IMR-90 (cell line): ENCODE measurements at regions of chr4 and their contacts with region 1.

Region 1: GRCh38 chr4:124334119-124334518 is 378.4 kb downstream of the ANKRD50 start:
- DNase-seq: peak; percentile 89
- ATAC-seq: peak; percentile 96
- H3K4me3 ChIP-seq: no peak overlapping the region
- H3K27ac ChIP-seq: no peak overlapping the region
- H3K4me1 ChIP-seq: no peaks in the 10 kb centered on the region
- H3K27me3 ChIP-seq: no peaks in the 10 kb centered on the region
- CTCF ChIP-seq: peak; percentile 75
- POLR2A ChIP-seq: no peak
- RAD21 ChIP-seq: peak; percentile 80

Region 2: DNA sequence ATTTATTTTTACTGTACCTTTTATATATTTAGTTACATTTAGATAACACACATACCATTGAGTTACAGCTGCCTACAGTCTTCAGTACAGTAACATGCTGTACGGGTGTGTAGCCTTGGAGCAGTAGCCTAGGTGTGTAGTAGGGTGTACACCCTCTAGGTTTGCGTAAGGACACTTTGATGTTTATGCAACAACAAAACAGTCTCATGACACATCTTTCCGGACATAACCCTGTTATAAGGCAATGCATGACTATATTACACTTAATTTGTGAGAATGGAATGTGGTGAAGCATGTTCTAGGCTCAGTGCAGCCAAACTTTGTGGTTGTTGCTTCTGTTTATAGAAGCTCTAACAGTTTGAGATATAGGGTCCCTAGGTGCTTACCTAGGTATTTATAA is 872.1 kb before region 1 on chr4:
- CTCF ChIA-PET with region 1: no interaction called
- POLR2A ChIA-PET with region 1: no interaction called
- dilution Hi-C with region 1: no loop called
- in situ Hi-C with region 1: no loop called
- intact Hi-C with region 1: no loop called
- DNase-seq: peak; percentile 26
- ATAC-seq: peak; percentile 53
- H3K4me3 ChIP-seq: no peak overlapping the region
- H3K27ac ChIP-seq: no peak overlapping the region
- H3K4me1 ChIP-seq: no peaks in the 10 kb centered on the region
- H3K27me3 ChIP-seq: no peaks in the 10 kb centered on the region
- CTCF ChIP-seq: no peak
- POLR2A ChIP-seq: no peak
- RAD21 ChIP-seq: no peak

Region 3: GRCh38 chr4:124641715-124642381 is 307.7 kb after region 1 on chr4:
- CTCF ChIA-PET with region 1: no interaction called
- POLR2A ChIA-PET with region 1: no interaction called
- dilution Hi-C with region 1: no loop called
- in situ Hi-C with region 1: no loop called
- intact Hi-C with region 1: loop called (anchors 10 kb)
- DNase-seq: peak; percentile 94
- ATAC-seq: peak; percentile 49
- H3K4me3 ChIP-seq: no peak overlapping the region
- H3K27ac ChIP-seq: no peak overlapping the region
- H3K4me1 ChIP-seq: no peaks in the 10 kb centered on the region
- H3K27me3 ChIP-seq: no peaks in the 10 kb centered on the region
- CTCF ChIP-seq: no peak
- POLR2A ChIP-seq: no peak
- RAD21 ChIP-seq: no peak

Region 4: GRCh38 chr4:124712372-124713184 is 378.5 kb after region 1 on chr4 and contains the start of gene ANKRD50:
- CTCF ChIA-PET with region 1: interaction called, 4 read pairs
- POLR2A ChIA-PET with region 1: no interaction called
- dilution Hi-C with region 1: no loop called
- in situ Hi-C with region 1: no loop called
- intact Hi-C with region 1: loop called (anchors 1 kb)
- DNase-seq: peak; percentile 94
- ATAC-seq: peak; percentile 78
- H3K4me3 ChIP-seq: peak within 1 kb of the TSS; percentile 87
- H3K27ac ChIP-seq: peak within 1 kb of the TSS; percentile 90
- H3K4me1 ChIP-seq: peaks cover 4% of the 10 kb centered on the region
- H3K27me3 ChIP-seq: no peaks in the 10 kb centered on the region
- CTCF ChIP-seq: no peak
- POLR2A ChIP-seq: peak; percentile 97
- RAD21 ChIP-seq: 0 out of 2 replicates have a peak, but pooled peaks have one; percentile 7
- total RNA-seq, gene ANKRD50: 35.3 and 45.8 TPM in 2 replicates

Region 5: DNA sequence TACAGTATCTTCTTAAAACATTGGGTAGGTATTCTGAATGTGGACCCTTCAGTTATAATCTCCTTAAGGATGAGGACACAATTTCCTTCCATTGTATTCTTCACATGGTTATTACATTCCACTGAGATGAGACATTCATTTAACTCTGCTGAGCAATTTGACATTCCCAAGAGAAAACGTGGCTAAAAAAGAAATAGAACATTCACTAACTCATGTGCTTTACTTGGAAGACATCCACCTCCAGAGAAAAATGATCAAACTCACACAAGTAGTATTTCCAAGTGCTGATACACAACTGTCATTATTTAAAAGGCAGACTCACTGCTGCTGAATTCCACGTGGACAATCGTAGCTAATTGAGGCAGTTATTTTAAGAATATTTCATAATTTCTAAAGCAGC is 606.3 kb after region 1 on chr4:
- CTCF ChIA-PET with region 1: no interaction called
- POLR2A ChIA-PET with region 1: no interaction called
- dilution Hi-C with region 1: no loop called
- in situ Hi-C with region 1: no loop called
- intact Hi-C with region 1: loop called (anchors 10 kb)
- DNase-seq: peak; percentile 98
- ATAC-seq: peak; percentile 68
- H3K4me3 ChIP-seq: no peak overlapping the region
- H3K27ac ChIP-seq: no peak overlapping the region
- H3K4me1 ChIP-seq: peaks cover 3% of the 10 kb centered on the region
- H3K27me3 ChIP-seq: no peaks in the 10 kb centered on the region
- CTCF ChIP-seq: no peak
- POLR2A ChIP-seq: no peak
- RAD21 ChIP-seq: no peak

Region 6: GRCh38 chr4:125041372-125041930 is 707.3 kb after region 1 on chr4:
- CTCF ChIA-PET with region 1: no interaction called
- POLR2A ChIA-PET with region 1: no interaction called
- dilution Hi-C with region 1: no loop called
- in situ Hi-C with region 1: no loop called
- intact Hi-C with region 1: loop called (anchors 10 kb)
- DNase-seq: no peak
- ATAC-seq: no peak
- H3K4me3 ChIP-seq: no peak overlapping the region
- H3K27ac ChIP-seq: no peak overlapping the region
- H3K4me1 ChIP-seq: no peaks in the 10 kb centered on the region
- H3K27me3 ChIP-seq: no peaks in the 10 kb centered on the region
- CTCF ChIP-seq: no peak
- POLR2A ChIP-seq: no peak
- RAD21 ChIP-seq: no peak

Region 7: DNA sequence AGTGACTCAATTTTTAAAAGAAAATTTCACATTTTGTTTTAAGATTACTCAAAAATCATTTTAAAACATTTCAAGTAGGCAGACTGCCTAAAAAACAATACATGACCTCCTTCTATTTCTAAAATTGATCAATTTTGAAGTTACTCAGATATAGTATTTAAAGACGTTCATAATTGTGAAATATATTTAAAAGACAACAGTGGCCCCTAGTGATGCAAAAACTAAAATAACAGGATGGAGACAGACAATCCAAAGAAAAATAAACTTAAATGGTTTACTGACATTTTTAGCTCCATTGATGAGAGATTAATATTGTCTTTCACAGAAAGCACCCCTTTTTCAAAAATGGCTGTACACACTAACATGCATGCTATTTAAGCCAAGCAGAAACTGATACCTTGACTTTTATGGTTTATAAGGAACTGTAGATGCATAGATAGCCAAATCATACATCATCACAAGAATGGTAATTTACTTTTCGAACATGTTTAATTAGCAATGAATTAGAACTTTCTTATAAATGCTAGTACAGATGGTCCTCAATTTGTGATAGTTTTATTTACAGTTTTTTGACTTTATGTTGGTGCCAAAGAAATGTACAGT is 910.8 kb after region 1 on chr4:
- CTCF ChIA-PET with region 1: interaction called, 4 read pairs
- POLR2A ChIA-PET with region 1: no interaction called
- dilution Hi-C with region 1: no loop called
- in situ Hi-C with region 1: loop called (anchors 10 kb)
- intact Hi-C with region 1: loop called (anchors 1 kb)
- DNase-seq: peak; percentile 47
- ATAC-seq: peak; percentile 56; the same call in 1 of the 2 replicates
- H3K4me3 ChIP-seq: no peak overlapping the region
- H3K27ac ChIP-seq: no peak overlapping the region
- H3K4me1 ChIP-seq: peaks cover 3% of the 10 kb centered on the region
- H3K27me3 ChIP-seq: no peaks in the 10 kb centered on the region
- CTCF ChIP-seq: peak; percentile 54
- POLR2A ChIP-seq: no peak
- RAD21 ChIP-seq: peak; percentile 57

Region 8: DNA sequence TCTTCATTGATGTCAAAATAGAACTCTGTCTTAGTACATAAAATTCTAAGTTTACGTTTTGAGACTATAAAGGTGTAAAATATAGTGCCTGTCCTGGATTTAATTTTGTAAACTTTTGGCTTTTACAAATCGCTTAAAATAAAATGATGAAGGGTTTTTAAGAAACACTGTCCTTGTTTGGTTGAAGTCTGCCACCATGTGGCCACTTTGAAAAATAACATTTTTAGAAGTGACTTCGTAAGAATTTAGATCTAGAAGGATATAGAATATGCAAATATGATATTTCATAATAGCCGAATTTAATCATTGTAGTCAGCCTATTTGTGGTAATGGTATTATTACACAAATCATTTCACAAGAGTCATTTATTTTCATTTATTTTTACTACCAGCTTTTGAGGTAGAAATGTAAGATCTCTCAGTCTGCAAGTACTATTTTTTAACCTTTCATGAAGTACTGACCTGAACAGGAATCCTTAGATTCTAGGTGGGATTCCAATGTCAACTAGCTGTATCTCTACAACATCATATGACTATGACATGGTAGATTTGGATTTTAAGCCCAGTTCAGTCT is 949.7 kb after region 1 on chr4:
- CTCF ChIA-PET with region 1: interaction called, 4 read pairs
- POLR2A ChIA-PET with region 1: interaction called, 3 read pairs
- dilution Hi-C with region 1: no loop called
- in situ Hi-C with region 1: no loop called
- intact Hi-C with region 1: loop called (anchors 1 kb)
- DNase-seq: peak; percentile 51
- ATAC-seq: peak; percentile 42; the same call in 1 of the 2 replicates
- H3K4me3 ChIP-seq: no peak overlapping the region
- H3K27ac ChIP-seq: no peak overlapping the region
- H3K4me1 ChIP-seq: no peaks in the 10 kb centered on the region
- H3K27me3 ChIP-seq: no peaks in the 10 kb centered on the region
- CTCF ChIP-seq: peak; percentile 64
- POLR2A ChIP-seq: no peak
- RAD21 ChIP-seq: peak; percentile 75

Region 9: GRCh38 chr4:125638790-125639621 is 1304.9 kb after region 1 on chr4:
- CTCF ChIA-PET with region 1: no interaction called
- POLR2A ChIA-PET with region 1: no interaction called
- dilution Hi-C with region 1: no loop called
- in situ Hi-C with region 1: no loop called
- intact Hi-C with region 1: no loop called
- DNase-seq: peak; percentile 1
- ATAC-seq: peak; percentile 53
- H3K4me3 ChIP-seq: no peak overlapping the region
- H3K27ac ChIP-seq: no peak overlapping the region
- H3K4me1 ChIP-seq: 0 out of 2 replicates have a peak, but pooled peaks cover 2% of the 10 kb centered on the region
- H3K27me3 ChIP-seq: no peaks in the 10 kb centered on the region
- CTCF ChIP-seq: no peak
- POLR2A ChIP-seq: no peak
- RAD21 ChIP-seq: no peak